Activated CD4-positive, alpha-beta memory T cell treated with anti-CD3 and anti-CD28 coated beads for 36 hours (primary cell): ENCODE measurements at regions of chr19 and their contacts with region 1.

Region 1: DNA sequence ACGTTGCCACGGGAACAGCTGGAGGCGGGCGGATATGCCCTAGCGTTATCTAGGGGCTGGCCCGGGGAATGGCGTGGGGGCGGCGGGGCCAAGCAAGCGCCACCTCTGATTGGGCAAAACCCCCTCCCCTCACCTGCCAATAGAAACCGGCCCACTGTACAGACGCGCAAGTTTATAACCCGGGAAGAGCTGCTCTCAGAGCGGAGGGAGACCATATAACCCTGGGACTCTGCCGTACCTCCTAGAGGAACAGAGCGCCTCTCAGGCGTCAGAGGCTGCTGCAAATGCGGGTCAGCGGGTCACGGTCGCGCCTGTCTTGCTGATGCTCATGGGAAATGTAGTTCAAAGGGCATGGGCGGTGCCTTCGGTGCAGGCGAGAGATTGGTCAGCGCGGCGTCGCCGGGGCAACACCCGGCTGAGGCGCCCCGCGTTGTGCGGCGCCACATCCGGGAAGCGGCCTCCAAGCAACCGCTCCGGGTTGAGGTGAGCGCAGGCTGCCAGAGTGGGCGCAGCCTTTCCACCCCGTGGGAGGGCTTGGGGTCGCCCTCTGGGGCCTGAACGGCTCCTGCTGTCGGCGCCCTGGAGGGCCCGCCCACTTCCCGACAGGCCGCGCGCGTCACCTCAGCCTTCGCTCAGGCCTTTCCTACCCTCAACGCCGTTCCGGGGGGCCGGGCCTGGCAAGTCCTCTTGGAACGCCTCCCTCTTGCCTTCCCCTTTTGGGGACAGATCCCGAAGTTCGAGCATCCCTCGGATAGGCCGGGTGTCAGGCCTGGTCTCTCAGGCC is at the start of gene ZNF446:
- DNase-seq: peak; percentile 98
- H3K4me3 Mint-ChIP-seq: peak within 1 kb of the TSS; percentile 93
- H3K27ac Mint-ChIP-seq: peak within 1 kb of the TSS; percentile 99
- H3K4me1 Mint-ChIP-seq: peaks cover 16% of the 10 kb centered on the region
- H3K27me3 Mint-ChIP-seq: no peaks in the 10 kb centered on the region
- total RNA-seq, gene ZNF446: 6.4 to 7.5 TPM

Region 2: GRCh38 chr19:58400916-58401839 is 74.7 kb before region 1 on chr19:
- CTCF ChIA-PET with region 1: no interaction called
- POLR2A ChIA-PET with region 1: no interaction called
- intact Hi-C with region 1: loop called (anchors 1 kb)
- DNase-seq: peak; percentile 100
- H3K4me3 Mint-ChIP-seq: peak overlapping the region; percentile 82
- H3K27ac Mint-ChIP-seq: peak overlapping the region; percentile 77
- H3K4me1 Mint-ChIP-seq: peaks cover 18% of the 10 kb centered on the region
- H3K27me3 Mint-ChIP-seq: peaks cover 3% of the 10 kb centered on the region

Region 3: DNA sequence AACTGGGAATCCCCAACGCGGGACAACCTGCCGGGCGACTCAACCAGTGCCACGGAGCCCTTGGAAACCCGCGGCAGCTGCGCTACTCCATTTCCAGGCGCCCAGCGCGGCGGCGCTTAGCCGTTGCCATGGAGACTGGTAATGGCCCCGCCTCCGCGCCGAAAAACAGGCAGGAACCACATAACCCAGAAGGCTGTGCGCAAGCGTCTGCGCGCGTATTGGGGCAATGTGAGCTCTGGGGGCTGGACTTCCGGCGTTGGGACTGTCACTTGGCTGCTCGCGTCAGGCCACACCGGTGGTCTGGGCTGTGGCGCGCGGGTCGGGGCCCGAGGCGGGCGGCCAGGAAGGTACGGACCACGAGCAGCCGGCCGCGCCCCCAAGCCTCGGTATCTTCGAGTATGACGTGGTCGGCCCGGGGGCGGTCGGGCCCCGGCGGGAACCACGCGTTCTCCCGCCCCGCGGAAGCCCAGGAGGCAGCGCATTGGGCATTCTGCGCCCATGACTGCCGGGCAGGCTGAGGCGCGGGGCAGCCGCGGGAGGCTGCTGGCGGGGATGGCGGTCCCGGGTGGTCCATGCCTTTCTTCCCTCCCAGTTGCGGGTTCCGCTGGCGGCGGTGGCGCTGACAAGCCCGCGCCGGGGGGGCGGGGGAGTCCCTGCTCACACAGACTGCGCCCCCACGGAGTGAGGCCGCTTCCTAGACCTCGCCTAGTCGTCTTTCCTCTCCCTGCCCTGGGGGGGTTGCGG is 24.4 kb before region 1 on chr19 and contains the start of gene ZNF324B:
- CTCF ChIA-PET with region 1: no interaction called
- POLR2A ChIA-PET with region 1: interaction called, 5 read pairs
- intact Hi-C with region 1: loop called (anchors 1 kb)
- DNase-seq: peak; percentile 97
- H3K4me3 Mint-ChIP-seq: peak within 1 kb of the TSS; percentile 78
- H3K27ac Mint-ChIP-seq: no peak within 1 kb of the TSS
- H3K4me1 Mint-ChIP-seq: peaks cover 21% of the 10 kb centered on the region
- H3K27me3 Mint-ChIP-seq: peaks cover 13% of the 10 kb centered on the region
- total RNA-seq, gene ZNF324B: 7.7 to 7.8 TPM

Region 4: GRCh38 chr19:58499021-58499927 is 23.4 kb after region 1 on chr19:
- CTCF ChIA-PET with region 1: no interaction called
- POLR2A ChIA-PET with region 1: no interaction called
- intact Hi-C with region 1: loop called (anchors 1 kb)
- DNase-seq: peak; percentile 100
- H3K4me3 Mint-ChIP-seq: peak overlapping the region; percentile 89
- H3K27ac Mint-ChIP-seq: peak overlapping the region; percentile 80
- H3K4me1 Mint-ChIP-seq: peaks cover 27% of the 10 kb centered on the region
- H3K27me3 Mint-ChIP-seq: no peaks in the 10 kb centered on the region